Activated CD4-positive, alpha-beta T cell treated with anti-CD3 and anti-CD28 coated beads, Interleukin-2, amount 10 ng/mL, durations not matched to agents 24 days and 14 days (primary cell): ENCODE measurements at regions of chr1 and their contacts with region 1.

Region 1: GRCh38 chr1:171801487-171801891 is 20.0 kb downstream of the METTL13 start:
- DNase-seq: no peak
- H3K4me3 Mint-ChIP-seq: no peak overlapping the region
- H3K27ac Mint-ChIP-seq: no peak overlapping the region
- H3K4me1 Mint-ChIP-seq: peaks cover 7% of the 10 kb centered on the region
- H3K27me3 Mint-ChIP-seq: no peaks in the 10 kb centered on the region

Region 2: DNA sequence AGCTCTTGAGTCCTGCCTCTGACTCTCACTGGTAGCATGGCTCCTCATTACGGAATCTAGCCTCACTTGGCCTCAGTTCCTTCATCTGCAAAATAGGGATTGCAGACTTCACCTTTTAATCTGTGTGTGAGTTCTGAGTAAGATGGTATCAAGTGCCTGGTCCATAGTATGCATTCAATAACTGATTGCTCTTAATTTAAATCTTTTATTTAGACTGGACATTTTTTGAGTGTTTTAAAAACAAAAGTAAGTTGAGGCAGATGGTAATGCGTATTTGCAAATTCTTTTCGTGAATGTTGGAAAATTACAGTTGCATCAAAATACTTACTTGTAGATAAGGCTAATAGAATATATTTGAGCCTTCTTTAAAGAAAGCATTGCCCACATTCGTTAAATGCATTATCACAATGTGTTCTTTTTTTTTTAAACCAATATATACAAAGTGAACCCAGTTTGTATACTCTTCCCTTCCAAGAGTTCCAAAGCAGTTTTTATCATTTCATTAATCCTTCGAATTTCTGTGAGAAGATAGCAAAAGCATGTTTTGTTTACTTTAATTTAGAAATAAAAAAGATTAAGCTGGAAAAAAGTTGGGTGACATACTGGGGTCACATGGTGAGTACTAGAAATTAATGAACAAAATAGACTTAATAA is 47.9 kb after region 1 on chr1:
- intact Hi-C with region 1: loop called (anchors 2 kb)
- DNase-seq: no peak
- H3K4me3 Mint-ChIP-seq: no peak overlapping the region
- H3K27ac Mint-ChIP-seq: no peak overlapping the region
- H3K4me1 Mint-ChIP-seq: no peaks in the 10 kb centered on the region
- H3K27me3 Mint-ChIP-seq: peaks cover 38% of the 10 kb centered on the region

Region 3: DNA sequence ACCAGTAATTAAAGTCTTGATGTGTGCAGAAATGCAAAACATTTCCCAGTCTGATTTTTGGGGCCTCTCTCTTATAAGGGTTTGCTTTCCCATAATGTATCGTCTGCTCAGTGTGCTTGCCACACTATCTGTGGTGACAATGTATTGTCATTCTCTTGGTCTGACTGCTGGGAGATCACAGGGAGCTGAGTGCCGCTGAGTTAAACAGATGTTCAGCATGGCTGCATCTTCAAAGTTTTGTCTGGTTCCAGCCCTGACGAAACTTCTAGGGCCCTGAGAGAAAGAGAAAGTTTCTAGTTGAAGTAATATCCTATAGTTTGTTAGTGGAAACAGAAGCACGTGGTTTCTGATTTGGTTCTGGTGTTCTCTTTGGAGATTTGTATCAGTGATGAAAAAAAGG is 82.4 kb after region 1 on chr1:
- intact Hi-C with region 1: no loop called
- DNase-seq: peak; percentile 72
- H3K4me3 Mint-ChIP-seq: no peak overlapping the region
- H3K27ac Mint-ChIP-seq: peak overlapping the region; percentile 58
- H3K4me1 Mint-ChIP-seq: peaks cover 10% of the 10 kb centered on the region
- H3K27me3 Mint-ChIP-seq: peaks cover 2% of the 10 kb centered on the region

Region 4: DNA sequence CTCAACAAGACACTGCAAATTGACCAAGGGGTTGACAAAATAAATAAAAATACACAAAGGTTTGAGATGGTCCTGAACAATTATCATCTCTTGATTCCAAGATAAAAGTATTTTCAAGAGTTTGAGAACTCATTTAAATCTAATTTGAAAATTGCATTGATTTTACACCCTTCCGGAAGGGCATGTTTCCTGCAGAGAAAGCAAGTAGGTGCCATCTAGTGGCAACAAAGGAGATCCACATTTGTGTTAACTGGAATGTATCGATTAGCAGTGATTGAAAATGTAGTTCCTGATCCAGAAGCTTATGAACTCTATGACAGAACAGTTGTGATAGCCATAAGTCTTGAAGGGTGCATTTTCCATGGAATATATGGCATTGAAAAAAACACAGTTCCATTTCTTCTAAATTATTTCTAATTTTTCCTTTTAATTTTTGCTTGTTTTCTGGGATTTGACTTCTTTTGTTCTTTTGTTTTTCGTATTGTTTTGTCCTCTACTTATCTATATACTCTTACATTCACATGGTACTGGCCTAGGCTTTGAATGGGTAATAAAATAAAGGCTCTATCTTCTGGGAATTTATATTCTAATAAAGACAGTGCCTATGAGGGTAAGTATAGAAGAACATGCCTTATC is 183.5 kb after region 1 on chr1:
- intact Hi-C with region 1: loop called (anchors 1 kb)
- DNase-seq: peak; percentile 68
- H3K4me3 Mint-ChIP-seq: no peak overlapping the region
- H3K27ac Mint-ChIP-seq: no peak overlapping the region
- H3K4me1 Mint-ChIP-seq: no peaks in the 10 kb centered on the region
- H3K27me3 Mint-ChIP-seq: peaks cover 10% of the 10 kb centered on the region

Region 5: DNA sequence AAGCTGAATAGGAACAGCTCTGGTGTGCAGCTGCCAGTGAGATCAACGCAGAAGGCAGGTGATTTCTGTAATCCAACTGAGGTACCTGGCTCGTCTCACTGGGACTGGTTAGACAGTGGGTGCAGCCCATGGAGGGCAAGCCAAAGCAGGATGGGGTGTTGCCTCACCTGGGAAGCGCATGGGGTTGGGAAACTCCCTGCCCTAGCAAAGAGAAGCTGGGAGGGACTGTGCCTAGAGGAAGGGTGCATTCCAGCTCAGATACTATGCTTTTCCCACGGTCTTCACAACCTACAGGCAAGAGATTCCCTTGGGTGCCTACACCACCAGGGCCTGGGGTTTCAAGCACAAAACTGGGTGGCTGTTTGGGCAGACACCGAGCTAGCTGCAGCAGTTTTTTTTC is 223.0 kb after region 1 on chr1:
- intact Hi-C with region 1: no loop called
- DNase-seq: no peak
- H3K4me3 Mint-ChIP-seq: no peak overlapping the region
- H3K27ac Mint-ChIP-seq: no peak overlapping the region
- H3K4me1 Mint-ChIP-seq: no peaks in the 10 kb centered on the region
- H3K27me3 Mint-ChIP-seq: peaks cover 29% of the 10 kb centered on the region